A673 (cell line): ENCODE measurements at regions of chr3 and their contacts with region 1.

Region 1: DNA sequence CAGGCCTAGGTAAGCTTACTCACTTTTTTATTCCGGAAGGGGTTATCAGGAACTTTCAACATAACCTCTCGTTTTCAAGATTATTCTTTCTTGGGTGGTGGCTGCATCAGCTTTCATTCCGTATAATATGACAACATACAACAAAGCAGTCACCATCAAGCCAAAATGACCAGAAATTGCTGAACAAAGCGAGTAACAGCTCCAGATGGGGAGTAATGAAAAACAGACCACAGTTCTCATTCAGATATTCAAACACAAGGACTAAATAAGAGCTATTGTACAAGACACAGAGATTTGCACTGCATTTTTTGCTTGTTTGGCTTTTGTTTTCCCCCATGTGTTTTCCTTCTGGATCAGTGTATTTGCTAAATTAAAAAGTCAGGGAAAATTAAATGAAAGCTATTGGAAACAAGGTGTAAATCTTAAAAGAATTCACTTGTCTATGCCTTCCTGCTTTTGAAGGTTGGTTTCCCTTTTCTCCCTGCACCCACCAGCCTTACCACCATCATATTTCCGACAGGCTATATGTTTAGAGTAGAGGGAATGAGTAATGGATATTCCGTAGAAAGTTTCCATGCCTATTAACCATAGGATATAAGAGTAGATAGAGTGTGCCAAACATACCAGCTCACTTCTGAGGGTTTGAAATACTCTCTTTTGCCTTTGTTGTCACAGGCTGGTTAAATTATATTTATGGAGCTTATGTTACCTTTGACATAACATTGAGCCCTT is 213.6 kb downstream of the RBMS3 start:
- DNase-seq: peak; percentile 17
- H3K4me3 ChIP-seq: no peak overlapping the region
- H3K27ac ChIP-seq: no peak overlapping the region
- H3K4me1 ChIP-seq: no peaks in the 10 kb centered on the region
- H3K27me3 ChIP-seq: no peaks in the 10 kb centered on the region
- CTCF ChIP-seq: no peak

Region 2: DNA sequence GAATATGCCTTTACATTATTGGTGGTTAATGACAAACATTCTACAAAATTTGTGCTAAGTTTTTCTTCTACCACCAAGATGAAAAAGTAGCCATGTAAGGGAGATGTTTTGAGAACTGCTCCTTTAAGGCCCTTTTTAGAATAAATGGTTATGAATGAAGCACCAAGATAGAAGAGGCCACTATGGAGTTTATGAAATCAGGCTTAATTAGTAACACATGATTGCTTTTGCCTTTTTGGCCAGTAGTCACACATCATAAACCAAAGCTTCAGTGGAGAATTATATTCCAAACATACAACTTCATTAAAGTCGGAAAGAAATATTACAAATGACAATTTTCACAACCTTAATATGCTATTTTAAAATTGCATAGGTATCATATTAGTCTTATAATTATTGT is 118.1 kb after region 1 on chr3:
- CTCF ChIA-PET with region 1: no interaction called
- POLR2A ChIA-PET with region 1: interaction called, 11 read pairs
- intact Hi-C with region 1: no loop called
- DNase-seq: no peak
- H3K4me3 ChIP-seq: no peak overlapping the region
- H3K27ac ChIP-seq: no peak overlapping the region
- H3K4me1 ChIP-seq: peaks cover 5% of the 10 kb centered on the region
- H3K27me3 ChIP-seq: no peaks in the 10 kb centered on the region
- CTCF ChIP-seq: no peak